Activated CD8-positive, alpha-beta T cell treated with anti-CD3 and anti-CD28 coated beads, Interleukin-2, amount 10 ng/mL, durations not matched to agents 7 days and 5 days (primary cell): ENCODE measurements at regions of chr19 and their contacts with region 1.

Region 1: DNA sequence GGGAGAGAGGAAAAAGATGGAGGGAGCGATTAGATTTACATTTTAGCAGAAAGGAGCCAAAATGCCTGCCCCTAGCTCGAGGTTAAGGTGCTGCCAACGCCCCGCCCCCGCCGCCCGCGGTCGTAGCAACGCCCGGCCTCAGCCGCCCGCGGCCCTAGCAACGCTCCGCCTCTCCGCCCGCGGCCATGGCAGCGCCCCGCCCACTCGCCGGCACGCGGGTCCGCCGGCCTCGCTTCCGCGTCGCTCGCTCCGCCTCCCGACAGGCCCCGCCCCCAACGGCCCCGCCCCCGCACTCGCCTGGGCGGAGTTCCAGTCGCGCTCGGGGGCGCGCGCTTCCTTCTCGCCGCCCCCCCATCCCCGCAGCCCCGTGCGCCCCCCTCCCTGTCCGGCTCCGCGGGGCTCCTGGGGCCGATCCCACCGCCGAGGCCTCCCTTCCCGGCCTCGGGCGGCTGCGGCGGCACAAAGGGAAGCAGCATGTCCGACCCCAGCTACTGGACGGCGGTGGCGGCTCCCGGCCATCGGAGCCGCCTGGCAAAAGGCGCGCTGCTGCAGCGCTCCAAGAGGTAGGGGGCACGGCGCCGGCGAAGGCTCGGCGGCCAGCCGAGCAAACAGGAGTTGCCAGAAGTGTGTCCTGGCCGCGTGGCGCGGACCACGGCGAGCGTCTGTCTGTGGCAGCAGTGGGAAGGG is 20.3 kb downstream of the MAST3 start:
- DNase-seq: peak; percentile 95
- ATAC-seq: peak; percentile 68
- H3K4me3 Mint-ChIP-seq: peak overlapping the region; percentile 82
- H3K27ac Mint-ChIP-seq: peak overlapping the region; percentile 89
- H3K4me1 Mint-ChIP-seq: peaks cover 51% of the 10 kb centered on the region
- H3K27me3 Mint-ChIP-seq: no peaks in the 10 kb centered on the region

Region 2: GRCh38 chr19:18091217-18091608 is 26.6 kb before region 1 on chr19:
- CTCF ChIA-PET with region 1: interaction called, 29 read pairs
- POLR2A ChIA-PET with region 1: interaction called, 38 read pairs
- DNase-seq: peak; percentile 90
- ATAC-seq: peak; percentile 67
- H3K4me3 Mint-ChIP-seq: peak overlapping the region; percentile 38
- H3K27ac Mint-ChIP-seq: peak overlapping the region; percentile 99
- H3K4me1 Mint-ChIP-seq: peaks cover 68% of the 10 kb centered on the region
- H3K27me3 Mint-ChIP-seq: no peaks in the 10 kb centered on the region

Region 3: GRCh38 chr19:18097217-18097992 is 20.4 kb before region 1 on chr19 and contains the start of gene MAST3:
- CTCF ChIA-PET with region 1: interaction called, 29 read pairs
- POLR2A ChIA-PET with region 1: interaction called, 3 read pairs
- DNase-seq: peak; percentile 94
- ATAC-seq: peak; percentile 98
- H3K4me3 Mint-ChIP-seq: peak within 1 kb of the TSS; percentile 82
- H3K27ac Mint-ChIP-seq: peak within 1 kb of the TSS; percentile 46
- H3K4me1 Mint-ChIP-seq: peaks cover 44% of the 10 kb centered on the region
- H3K27me3 Mint-ChIP-seq: no peaks in the 10 kb centered on the region
- total RNA-seq, gene MAST3: 22.9 to 25.1 TPM

Region 4: DNA sequence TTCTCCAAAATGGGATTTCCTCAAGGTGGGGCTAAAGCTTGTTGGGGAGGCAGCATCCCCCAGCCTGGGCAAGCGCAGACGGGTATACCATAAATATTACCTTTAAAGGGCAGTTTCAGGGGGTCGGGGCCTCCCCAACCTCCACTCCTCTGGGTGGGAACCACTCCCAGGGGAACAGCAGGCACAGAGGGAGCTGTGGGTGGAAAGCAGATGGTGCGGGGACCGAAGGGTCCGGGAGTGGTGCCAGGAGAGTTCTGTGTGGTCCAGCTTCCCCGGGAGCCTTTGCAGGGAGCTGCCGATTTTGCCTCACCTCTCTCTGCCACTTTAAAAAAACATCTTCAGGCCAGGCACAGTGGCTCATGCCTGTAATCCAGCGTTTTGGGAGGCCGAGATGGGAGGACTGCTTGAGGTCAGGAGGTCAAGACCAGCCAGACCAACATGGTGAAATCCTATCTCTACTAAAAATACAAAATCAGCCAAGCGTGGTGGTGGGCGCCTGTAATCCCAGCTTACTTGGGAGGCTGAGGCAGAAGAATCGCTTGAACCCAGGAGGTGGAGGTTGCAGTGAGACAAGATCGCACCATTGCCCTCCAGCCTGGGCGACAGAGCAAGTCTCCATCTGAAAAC is 14.8 kb before region 1 on chr19:
- CTCF ChIA-PET with region 1: interaction called, 20 read pairs
- POLR2A ChIA-PET with region 1: interaction called, 3 read pairs
- DNase-seq: no peak
- ATAC-seq: no peak
- H3K4me3 Mint-ChIP-seq: no peak overlapping the region
- H3K27ac Mint-ChIP-seq: no peak overlapping the region
- H3K4me1 Mint-ChIP-seq: peaks cover 34% of the 10 kb centered on the region
- H3K27me3 Mint-ChIP-seq: no peaks in the 10 kb centered on the region

Region 5: GRCh38 chr19:18152444-18152816 is 34.6 kb after region 1 on chr19:
- CTCF ChIA-PET with region 1: interaction called, 13 read pairs
- POLR2A ChIA-PET with region 1: interaction called, 14 read pairs
- DNase-seq: peak; percentile 100
- ATAC-seq: peak; percentile 81
- H3K4me3 Mint-ChIP-seq: peak overlapping the region; percentile 79
- H3K27ac Mint-ChIP-seq: peak overlapping the region; percentile 98
- H3K4me1 Mint-ChIP-seq: peaks cover 30% of the 10 kb centered on the region
- H3K27me3 Mint-ChIP-seq: no peaks in the 10 kb centered on the region

Region 6: DNA sequence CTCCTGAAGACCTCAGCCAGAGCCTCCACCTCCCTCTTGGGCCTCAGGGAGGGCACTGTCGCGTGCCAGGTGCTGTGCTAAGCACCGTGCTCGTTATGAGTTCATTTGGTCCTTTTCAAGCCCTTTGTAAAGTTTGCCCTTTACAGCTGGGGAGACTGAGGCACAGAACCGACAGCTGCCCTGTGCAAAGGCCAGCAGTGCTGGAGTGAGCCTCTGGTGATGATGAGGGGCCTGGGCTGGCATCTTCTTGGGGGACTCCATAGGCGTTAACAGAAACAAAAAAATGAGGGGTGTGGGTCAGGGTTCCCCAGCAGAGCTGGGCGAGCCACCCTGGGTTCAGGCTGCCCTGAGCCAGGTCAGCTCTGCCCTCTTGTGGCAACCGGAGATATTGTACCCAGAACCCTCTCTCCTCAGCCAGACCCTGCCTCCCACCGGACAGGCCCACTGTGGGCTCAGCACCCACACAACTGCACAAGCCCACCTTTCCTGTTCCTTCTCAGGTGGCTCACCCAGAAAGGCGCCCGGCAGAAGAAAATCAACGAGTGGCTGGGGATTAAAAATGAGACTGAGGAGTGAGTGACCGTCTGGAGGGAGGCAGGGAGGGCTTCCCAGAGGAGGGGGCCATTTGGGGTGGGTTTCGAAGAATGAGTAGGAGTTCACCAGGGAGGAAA is 50.3 kb after region 1 on chr19:
- CTCF ChIA-PET with region 1: interaction called, 35 read pairs
- POLR2A ChIA-PET with region 1: no interaction called
- DNase-seq: peak; percentile 75
- ATAC-seq: peak; percentile 98
- H3K4me3 Mint-ChIP-seq: no peak overlapping the region
- H3K27ac Mint-ChIP-seq: no peak overlapping the region
- H3K4me1 Mint-ChIP-seq: peaks cover 9% of the 10 kb centered on the region
- H3K27me3 Mint-ChIP-seq: no peaks in the 10 kb centered on the region

Region 7: DNA sequence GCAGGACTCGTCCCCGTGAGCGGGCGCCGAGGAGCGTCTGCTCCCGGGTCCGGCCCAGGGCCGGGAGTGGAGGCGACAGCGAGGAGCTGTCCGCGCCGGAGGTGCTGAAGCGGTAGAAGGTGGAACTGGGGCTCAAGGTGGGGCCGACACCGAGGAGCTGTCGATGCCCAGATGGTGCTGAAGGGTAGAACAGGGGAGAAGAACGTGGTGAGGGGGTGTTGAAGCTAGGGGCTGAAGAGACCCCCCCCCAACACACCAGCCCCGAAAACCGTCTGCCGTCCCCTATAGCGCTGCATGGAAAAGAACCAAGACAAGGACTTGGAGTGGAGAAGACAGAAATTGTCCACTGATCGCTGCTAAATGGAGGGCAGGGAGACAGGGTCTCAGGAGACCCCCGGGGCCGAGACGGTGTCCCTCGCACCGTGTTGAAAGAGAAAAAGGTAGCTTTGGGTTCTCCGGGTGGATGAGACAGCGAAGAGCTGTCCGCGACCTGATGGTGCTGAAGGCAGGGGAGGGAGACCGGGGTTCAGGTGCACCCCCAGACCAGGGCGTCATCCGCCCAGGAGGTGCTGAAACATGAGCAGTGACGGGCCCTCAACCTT is 115.5 kb after region 1 on chr19:
- CTCF ChIA-PET with region 1: no interaction called
- POLR2A ChIA-PET with region 1: no interaction called
- DNase-seq: peak; percentile 79
- ATAC-seq: peak; percentile 87
- H3K4me3 Mint-ChIP-seq: no peak overlapping the region
- H3K27ac Mint-ChIP-seq: no peak overlapping the region
- H3K4me1 Mint-ChIP-seq: peaks cover 6% of the 10 kb centered on the region
- H3K27me3 Mint-ChIP-seq: peaks cover 27% of the 10 kb centered on the region